Activated B cell treated with CpG ODN at 0.5 μM for 24 hours (primary cell): ENCODE measurements at regions of chr2 and their contacts with region 1.

Region 1: DNA sequence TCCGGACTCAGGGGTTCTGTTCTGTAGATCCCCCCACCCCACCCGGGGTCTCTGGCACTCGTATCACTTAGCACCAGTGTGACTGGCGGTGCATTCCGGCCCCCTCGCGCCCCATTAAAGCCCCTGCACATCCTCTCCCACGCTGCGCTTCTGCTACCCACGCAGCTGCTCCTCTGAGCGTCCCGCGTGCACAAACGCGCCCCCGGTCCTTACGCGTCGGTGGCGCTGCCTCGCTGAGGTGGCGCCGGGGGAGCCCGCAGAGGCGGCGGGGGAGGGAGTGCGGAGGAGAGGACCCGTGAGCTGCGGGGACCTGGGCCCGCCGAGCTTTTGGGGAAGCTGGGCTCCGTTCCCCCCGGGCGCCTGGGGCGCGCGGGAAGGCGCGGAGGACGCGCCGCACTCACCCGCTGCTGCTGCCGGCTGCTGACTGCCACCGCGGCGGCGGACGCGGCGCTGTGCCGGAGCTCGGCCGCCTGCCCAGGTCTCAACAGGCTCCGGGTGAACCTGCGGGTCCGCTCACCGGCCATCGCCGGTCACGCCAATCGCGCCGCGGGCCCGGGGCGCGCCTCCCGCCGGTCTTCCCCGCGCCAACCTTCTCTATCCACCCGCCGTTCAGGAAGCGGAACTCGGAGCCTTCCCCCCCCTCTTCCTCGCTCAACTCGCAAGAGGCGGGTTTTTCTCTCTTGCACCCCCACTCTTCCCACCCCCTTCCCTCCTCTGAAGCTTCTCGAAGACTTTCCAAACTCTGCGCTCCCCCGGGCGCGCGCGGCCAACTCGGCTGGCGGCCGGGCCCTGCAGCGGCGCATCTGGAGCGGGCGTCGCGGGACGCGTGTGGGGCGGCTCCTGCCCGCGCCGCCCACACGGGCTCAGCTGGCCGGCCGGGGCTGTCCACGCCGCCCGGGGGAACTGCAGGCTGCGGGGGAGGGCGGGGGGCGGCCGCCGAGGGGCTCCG is at the start of gene DOCK10:
- DNase-seq: peak; percentile 63
- ATAC-seq: peak; percentile 43
- H3K4me3 Mint-ChIP-seq: peak within 1 kb of the TSS; percentile 96
- H3K27ac Mint-ChIP-seq: peak within 1 kb of the TSS; percentile 96
- H3K4me1 Mint-ChIP-seq: peaks cover 56% of the 10 kb centered on the region
- H3K27me3 Mint-ChIP-seq: no peaks in the 10 kb centered on the region
- CTCF ChIP-seq: no peak
- total RNA-seq, gene DOCK10: 159 and 172 TPM in 2 replicates

Region 2: DNA sequence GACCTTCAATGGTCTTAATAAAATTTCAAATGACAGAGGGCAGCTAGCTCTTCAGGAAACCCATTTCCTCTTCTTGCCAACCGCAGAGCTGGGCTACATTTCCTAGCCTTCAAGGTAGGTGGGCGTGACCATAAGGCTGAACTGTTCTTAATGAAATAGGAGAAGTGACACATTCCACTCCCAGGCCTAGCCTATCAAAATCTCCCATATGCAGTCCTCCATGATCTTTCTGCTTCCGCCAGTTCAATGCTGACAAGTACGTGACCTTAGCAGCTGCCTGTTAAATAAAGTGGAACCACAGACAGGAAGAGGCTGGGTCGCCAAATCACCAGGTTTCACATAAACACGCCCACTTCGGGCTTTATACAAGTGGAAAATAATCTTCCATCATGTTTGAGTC is 1016.3 kb before region 1 on chr2:
- CTCF ChIA-PET with region 1: no interaction called
- POLR2A ChIA-PET with region 1: no interaction called
- intact Hi-C with region 1: loop called (anchors 2 kb)
- DNase-seq: peak; percentile 27
- ATAC-seq: peak; percentile 99
- H3K4me3 Mint-ChIP-seq: peak overlapping the region; percentile 53
- H3K27ac Mint-ChIP-seq: peak overlapping the region; percentile 79
- H3K4me1 Mint-ChIP-seq: peaks cover 49% of the 10 kb centered on the region
- H3K27me3 Mint-ChIP-seq: no peaks in the 10 kb centered on the region
- CTCF ChIP-seq: no peak

Region 3: GRCh38 chr2:224882291-224883171 is 159.6 kb before region 1 on chr2:
- CTCF ChIA-PET with region 1: no interaction called
- POLR2A ChIA-PET with region 1: no interaction called
- intact Hi-C with region 1: loop called (anchors 2 kb)
- DNase-seq: no peak
- ATAC-seq: peak; percentile 77
- H3K4me3 Mint-ChIP-seq: peak overlapping the region; percentile 13
- H3K27ac Mint-ChIP-seq: peak overlapping the region; percentile 55
- H3K4me1 Mint-ChIP-seq: peaks cover 32% of the 10 kb centered on the region
- H3K27me3 Mint-ChIP-seq: no peaks in the 10 kb centered on the region
- CTCF ChIP-seq: no peak

Region 4: DNA sequence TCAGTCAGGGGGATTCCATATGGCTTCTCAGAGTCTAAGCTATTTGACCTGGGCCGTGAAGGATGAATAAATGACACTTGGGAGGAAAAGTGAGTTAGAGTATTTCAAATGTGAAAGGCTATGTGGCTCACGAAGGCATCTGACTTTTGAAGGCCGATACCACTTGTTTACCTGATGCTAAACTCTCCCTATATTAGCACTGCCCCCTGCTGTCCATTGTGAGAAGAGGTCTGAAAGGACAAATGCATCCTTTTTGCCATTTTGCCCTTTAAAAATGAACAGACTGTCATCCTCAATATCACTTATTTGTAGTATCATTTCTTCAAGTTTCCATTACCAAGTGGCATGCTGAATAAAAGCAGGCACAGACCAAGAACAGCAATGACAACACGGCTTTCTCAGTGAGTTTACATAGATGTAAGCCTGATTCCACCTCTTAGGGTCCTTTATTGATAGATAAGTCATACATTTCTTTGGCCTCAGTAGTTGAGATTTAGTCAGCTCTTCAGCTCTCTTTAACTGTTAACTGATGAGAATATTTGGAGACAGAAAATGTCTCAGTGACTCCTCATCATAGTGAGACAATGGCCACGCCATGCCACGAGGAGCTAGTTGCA is 40.0 kb before region 1 on chr2:
- CTCF ChIA-PET with region 1: interaction called, 17 read pairs
- POLR2A ChIA-PET with region 1: interaction called, 10 read pairs
- intact Hi-C with region 1: loop called (anchors 1 kb)
- DNase-seq: no peak
- ATAC-seq: peak; percentile 68
- H3K4me3 Mint-ChIP-seq: peak overlapping the region; percentile 53
- H3K27ac Mint-ChIP-seq: peak overlapping the region; percentile 79
- H3K4me1 Mint-ChIP-seq: peaks cover 34% of the 10 kb centered on the region
- H3K27me3 Mint-ChIP-seq: no peaks in the 10 kb centered on the region
- CTCF ChIP-seq: no peak

Region 5: GRCh38 chr2:225056330-225057065 is 14.4 kb after region 1 on chr2:
- CTCF ChIA-PET with region 1: interaction called, 4 read pairs
- POLR2A ChIA-PET with region 1: interaction called, 5 read pairs
- intact Hi-C with region 1: loop called (anchors 2 kb)
- DNase-seq: no peak
- ATAC-seq: no peak
- H3K4me3 Mint-ChIP-seq: no peak overlapping the region
- H3K27ac Mint-ChIP-seq: no peak overlapping the region
- H3K4me1 Mint-ChIP-seq: peaks cover 5% of the 10 kb centered on the region
- H3K27me3 Mint-ChIP-seq: no peaks in the 10 kb centered on the region
- CTCF ChIP-seq: no peak

Region 6: GRCh38 chr2:226835796-226836547 is 1793.8 kb after region 1 on chr2 and contains the start of gene RHBDD1:
- CTCF ChIA-PET with region 1: no interaction called
- POLR2A ChIA-PET with region 1: no interaction called
- intact Hi-C with region 1: loop called (anchors 2 kb)
- DNase-seq: peak; percentile 93
- ATAC-seq: peak; percentile 86
- H3K4me3 Mint-ChIP-seq: peak within 1 kb of the TSS; percentile 90
- H3K27ac Mint-ChIP-seq: peak within 1 kb of the TSS; percentile 97
- H3K4me1 Mint-ChIP-seq: peaks cover 69% of the 10 kb centered on the region
- H3K27me3 Mint-ChIP-seq: no peaks in the 10 kb centered on the region
- CTCF ChIP-seq: no peak
- total RNA-seq, gene RHBDD1: 71.1 and 90.2 TPM in 2 replicates